ENCODE measurements at regions of chr16 and their contacts with region 1.

Region 1: DNA sequence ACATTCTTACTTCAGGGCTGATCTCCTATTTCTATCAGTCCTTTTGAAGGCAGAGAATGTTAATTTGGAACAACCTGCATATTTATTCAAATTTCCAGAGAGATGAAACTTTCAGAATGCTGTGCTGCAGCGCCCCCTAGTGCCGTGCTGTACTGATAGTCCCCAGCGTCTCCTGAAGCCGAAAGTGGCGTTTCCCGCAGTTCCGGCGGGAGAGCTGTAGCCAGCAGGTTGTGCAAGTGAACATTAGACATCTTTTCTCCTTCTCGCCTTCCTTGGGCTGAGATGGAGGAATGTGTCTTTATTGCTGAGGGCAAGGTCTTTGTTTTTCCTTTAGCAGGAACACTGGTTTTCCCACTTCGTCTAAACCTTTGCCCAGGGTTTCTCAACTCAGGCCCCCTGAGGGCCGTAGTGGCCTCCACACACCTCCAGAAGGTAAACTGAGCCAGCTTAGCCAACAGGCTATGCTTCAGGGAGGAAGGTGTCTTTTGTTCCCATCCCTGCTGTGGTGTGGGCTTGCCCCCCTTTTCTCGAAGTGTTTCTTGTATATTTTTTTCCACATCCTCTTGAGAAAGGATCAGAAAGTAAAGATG is 26.4 kb downstream of the USP10 start:
- DNase-seq: peak; percentile 94
- H3K4me3 ChIP-seq: no peak overlapping the region
- H3K27ac ChIP-seq: peak overlapping the region in 1 of 2 donors; percentile 63
- H3K4me1 ChIP-seq: peaks cover 16% of the 10 kb centered on the region
- H3K27me3 ChIP-seq: no peaks in the 10 kb centered on the region
- CTCF ChIP-seq: peak; percentile 84 to 98 (median 94)
- POLR2A ChIP-seq: no peak

Region 2: GRCh38 chr16:84511180-84511824 is 214.9 kb before region 1 on chr16:
- intact Hi-C with region 1: loop called (anchors 5 kb)
- DNase-seq: peak; percentile 75
- H3K4me3 ChIP-seq: no peak overlapping the region
- H3K27ac ChIP-seq: no peak overlapping the region
- H3K4me1 ChIP-seq: no peaks in the 10 kb centered on the region
- H3K27me3 ChIP-seq: no peaks in the 10 kb centered on the region
- CTCF ChIP-seq: peak; percentile 89 to 99 (median 96)
- POLR2A ChIP-seq: no peak

Region 3: DNA sequence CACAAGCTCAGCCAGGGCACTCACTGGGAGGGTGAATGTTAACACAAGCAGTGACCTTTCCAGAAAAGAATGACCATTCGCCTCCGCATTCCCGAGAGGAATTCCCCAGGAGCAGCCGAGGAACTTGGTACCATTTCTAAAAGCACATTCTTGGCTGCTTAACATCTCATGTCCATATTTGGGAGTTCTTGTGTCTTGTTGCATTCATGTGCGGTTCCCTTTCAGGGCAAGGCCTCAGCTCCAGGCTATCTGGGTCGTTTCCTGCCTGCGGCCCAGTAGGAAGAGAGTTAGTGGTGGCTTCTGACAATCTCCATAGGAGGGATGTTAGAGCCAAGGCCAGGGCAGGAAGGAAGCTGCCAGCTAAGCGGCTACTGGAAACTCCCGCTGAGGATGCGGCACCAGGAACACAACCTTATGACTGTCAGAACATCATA is 193.9 kb before region 1 on chr16:
- intact Hi-C with region 1: loop called (anchors 5 kb)
- DNase-seq: peak; percentile 35
- H3K4me3 ChIP-seq: no peak overlapping the region
- H3K27ac ChIP-seq: peak overlapping the region; percentile 59
- H3K4me1 ChIP-seq: peaks cover 7% of the 10 kb centered on the region
- H3K27me3 ChIP-seq: no peaks in the 10 kb centered on the region
- CTCF ChIP-seq: no peak
- POLR2A ChIP-seq: no peak

Region 4: DNA sequence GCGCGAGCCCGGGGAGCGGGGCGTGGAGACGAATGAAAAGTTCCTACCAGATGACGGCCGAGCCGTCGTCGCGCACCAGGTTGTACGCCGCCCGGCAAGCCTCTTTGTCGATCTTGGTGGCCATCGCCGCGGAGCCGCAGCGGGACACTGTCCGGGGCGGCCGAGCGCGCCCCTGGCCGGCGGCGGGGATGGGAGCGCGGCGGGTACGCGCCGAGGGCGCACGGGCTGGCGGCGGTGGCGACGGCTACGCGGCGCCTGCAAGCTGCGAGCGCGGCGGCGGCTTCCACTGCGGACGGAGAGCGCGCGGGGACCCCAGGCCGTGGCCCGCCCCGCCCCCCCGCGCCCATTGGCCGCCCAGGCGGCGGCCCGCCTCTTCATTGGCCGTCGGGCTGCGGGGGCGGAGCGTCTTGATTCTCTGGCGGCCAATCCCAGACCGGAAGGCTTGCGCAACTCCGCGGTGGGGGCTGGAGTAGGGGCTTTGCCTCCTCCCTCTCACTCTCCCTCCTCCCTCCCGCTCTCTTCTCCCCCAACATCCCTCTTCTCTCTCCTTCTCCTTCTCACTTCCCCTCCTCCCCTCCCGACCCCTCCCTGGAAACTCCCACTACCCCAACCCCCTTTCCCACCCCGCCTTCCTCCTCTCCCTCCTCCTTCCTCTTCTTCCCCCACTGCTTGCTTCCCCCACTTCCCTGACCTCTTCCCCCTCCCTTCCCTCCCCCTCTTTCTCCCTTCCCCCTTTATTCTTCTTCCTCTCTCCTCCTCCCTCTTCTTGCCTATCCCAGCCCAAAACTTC is 108.2 kb before region 1 on chr16 and contains the start of gene COTL1:
- intact Hi-C with region 1: loop called (anchors 5 kb)
- DNase-seq: peak; percentile 95
- H3K4me3 ChIP-seq: peak within 1 kb of the TSS; percentile 66 to 67
- H3K27ac ChIP-seq: peak within 1 kb of the TSS; percentile 52 to 61
- H3K4me1 ChIP-seq: peaks cover 9% of the 10 kb centered on the region
- H3K27me3 ChIP-seq: no peaks in the 10 kb centered on the region
- CTCF ChIP-seq: peak in 1 of 4 experiments; percentile 5
- POLR2A ChIP-seq: peak; percentile 61
- total RNA-seq, gene COTL1: 46.8 to 110 TPM

Region 5: DNA sequence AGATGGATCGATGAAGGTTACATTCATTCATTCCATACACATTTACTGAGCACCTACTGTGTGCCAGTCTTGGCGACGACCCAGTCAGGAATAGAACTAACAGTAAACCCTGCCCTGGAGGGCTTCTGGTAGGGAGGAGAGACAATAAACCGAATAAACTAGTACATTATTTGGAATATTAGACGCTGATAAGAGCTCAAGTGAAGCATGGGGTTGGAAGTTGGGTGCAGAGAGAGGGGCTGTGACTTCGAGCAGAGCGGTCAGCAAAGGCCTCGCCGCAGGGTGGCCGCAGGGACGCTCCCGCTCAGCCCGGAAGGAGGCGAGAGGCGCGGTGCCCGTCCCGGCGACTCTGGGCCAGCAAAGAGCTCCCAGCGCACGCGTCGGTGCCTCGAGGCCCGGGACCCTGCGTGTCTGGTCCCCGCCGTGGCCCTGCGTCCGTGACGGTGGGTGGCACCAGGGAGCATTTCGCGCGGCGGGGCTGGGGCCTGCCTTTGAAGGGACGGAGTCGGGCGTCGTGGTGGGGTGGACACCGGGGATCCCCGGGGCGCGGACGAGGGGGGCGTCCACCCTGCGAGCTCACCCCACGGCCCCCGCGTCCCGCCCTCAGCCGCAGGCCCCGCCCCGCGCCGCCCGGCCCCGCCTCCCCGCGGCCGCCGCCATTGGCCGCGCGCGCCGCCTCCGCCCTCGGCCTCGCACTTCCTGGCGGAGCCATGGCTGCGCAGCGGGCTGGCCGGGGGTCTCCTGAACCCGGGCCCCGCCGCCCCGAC is 78.2 kb before region 1 on chr16 and contains the start of gene KLHL36:
- intact Hi-C with region 1: loop called (anchors 10 kb)
- DNase-seq: peak; percentile 49
- H3K4me3 ChIP-seq: peak within 1 kb of the TSS; percentile 79 to 80
- H3K27ac ChIP-seq: peak within 1 kb of the TSS; percentile 82 to 87
- H3K4me1 ChIP-seq: no peaks in the 10 kb centered on the region
- H3K27me3 ChIP-seq: no peaks in the 10 kb centered on the region
- CTCF ChIP-seq: peak in 1 of 4 experiments; percentile 7
- POLR2A ChIP-seq: no peak
- total RNA-seq, gene KLHL36: 57.1 to 106 TPM

Region 6: DNA sequence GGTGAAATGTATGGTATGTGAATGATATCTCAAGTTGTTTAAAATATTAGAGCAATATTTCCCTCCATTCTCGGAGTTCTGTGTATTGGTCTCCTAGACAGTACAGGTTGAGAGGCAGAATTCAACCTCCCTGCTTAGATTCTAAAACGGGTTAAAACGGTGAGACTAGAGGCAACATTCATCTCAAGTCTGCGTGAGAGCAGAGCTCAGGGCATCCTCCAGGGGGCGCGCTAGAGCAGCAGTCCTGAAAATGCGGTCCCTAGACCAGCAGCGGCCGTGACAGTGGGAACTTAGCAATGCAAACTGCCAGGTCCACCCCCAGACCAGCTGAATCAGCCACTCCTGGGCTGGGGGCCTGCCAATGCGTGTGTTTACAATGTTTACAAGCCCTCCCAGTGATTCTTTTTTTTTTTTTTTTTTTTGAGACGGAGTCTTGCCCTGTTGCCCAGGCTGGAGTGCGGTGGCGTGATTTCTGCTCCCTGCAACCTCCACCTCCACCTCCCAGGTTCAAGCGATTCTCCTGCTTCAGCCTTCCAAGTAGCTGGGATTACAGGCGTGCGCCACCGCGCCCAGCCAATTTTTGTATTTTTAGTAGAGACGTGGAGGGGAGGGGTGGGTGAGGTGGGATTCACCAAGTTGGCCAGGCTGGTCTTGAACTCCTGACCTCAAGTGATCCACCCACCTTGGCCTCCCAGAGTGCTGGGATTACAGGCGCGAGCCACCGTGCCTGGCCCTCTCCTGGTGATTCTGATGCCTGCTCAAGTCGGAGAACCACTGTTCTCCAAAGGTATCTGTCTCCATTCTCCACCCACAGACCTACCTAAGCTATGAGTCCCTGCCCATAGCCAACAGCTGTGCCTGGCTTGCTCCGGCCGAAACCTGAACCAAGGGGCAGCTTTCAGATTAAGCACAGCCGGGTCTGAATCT is 53.6 kb before region 1 on chr16:
- intact Hi-C with region 1: loop called (anchors 5 kb)
- DNase-seq: peak; percentile 77
- H3K4me3 ChIP-seq: no peak overlapping the region
- H3K27ac ChIP-seq: no peak overlapping the region
- H3K4me1 ChIP-seq: no peaks in the 10 kb centered on the region
- H3K27me3 ChIP-seq: no peaks in the 10 kb centered on the region
- CTCF ChIP-seq: peak; percentile 79 to 95 (median 87)
- POLR2A ChIP-seq: peak; percentile 13

Region 7: DNA sequence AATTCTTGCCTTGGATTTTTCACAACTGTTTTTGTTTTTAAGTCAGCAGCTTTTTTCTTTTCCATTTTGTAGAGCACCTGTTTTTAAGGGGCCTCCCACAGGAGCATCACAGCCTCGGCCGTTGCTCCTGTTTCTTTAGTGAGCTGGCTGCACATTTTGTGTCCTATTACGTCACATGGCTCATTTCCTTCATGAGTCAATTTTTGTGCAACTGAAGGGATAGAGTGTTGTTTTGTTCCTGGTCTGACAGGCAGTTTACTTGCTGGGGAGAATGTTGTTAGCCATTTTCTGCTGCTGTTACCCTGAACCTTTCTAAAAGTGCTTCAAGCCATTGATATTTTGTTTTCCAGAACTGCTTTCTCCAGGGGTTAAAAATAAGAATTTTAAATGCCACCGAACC is 48.6 kb after region 1 on chr16:
- intact Hi-C with region 1: no loop called
- DNase-seq: no peak
- H3K4me3 ChIP-seq: no peak overlapping the region
- H3K27ac ChIP-seq: peak overlapping the region; percentile 65 to 72
- H3K4me1 ChIP-seq: no peaks in the 10 kb centered on the region
- H3K27me3 ChIP-seq: no peaks in the 10 kb centered on the region
- CTCF ChIP-seq: no peak
- POLR2A ChIP-seq: no peak

Measured in prostate gland (tissue), 2 donors.